ENCODE measurements at regions of chr2 and their contacts with region 1.

Region 1: DNA sequence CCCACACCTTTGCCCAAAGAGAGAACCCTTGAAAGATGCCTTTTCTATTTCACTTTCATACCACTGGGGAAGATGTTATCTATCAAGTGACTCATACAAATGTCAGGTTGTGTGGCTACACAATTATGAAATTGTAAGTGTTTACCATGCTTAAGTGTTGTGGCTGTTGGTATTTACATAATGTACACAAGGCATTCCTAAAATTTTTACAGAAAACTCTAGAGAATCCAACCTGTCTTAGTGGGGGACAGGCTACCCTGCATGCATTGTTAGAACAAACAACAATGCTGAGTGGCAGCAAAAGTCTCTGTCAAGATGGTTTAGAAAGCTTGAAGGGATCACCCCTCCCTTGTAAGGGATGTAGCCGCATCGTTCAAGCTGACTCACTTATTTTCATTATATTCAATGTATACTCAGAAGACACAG is 5.5 kb upstream of the MGAT4A start:
- DNase-seq: peak; percentile 44 to 98
- H3K4me3 ChIP-seq: no peak overlapping the region
- H3K27ac ChIP-seq: peak overlapping the region; percentile 3
- H3K4me1 ChIP-seq: peaks cover 37% of the 10 kb centered on the region
- H3K27me3 ChIP-seq: no peaks in the 10 kb centered on the region
- CTCF ChIP-seq: no peak

Region 2: DNA sequence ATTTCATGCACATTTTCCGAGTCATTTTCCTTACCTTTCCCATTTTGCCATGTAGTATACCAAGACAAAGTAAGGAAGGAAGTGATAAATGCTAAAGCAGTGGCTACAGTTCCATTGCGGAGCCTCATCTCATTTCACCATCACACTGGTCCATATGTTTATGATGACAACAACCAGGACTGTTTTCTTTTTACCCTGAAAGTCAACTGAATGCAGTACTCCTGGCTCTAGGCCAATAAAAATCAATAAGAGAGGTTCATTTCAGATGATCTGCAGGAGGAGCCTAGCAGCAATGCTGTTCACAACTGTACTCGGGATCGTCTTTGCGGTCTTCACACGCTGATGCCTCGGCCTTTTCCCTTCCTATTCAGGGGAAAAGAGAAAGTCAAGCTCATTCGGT is 10.3 kb before region 1 on chr2:
- CTCF ChIA-PET with region 1: no interaction called
- POLR2A ChIA-PET with region 1: interaction called, 12 read pairs
- intact Hi-C with region 1: no loop called
- DNase-seq: no peak
- H3K4me3 ChIP-seq: no peak overlapping the region
- H3K27ac ChIP-seq: no peak overlapping the region
- H3K4me1 ChIP-seq: peaks cover 15% of the 10 kb centered on the region
- H3K27me3 ChIP-seq: no peaks in the 10 kb centered on the region
- CTCF ChIP-seq: no peak

Region 3: DNA sequence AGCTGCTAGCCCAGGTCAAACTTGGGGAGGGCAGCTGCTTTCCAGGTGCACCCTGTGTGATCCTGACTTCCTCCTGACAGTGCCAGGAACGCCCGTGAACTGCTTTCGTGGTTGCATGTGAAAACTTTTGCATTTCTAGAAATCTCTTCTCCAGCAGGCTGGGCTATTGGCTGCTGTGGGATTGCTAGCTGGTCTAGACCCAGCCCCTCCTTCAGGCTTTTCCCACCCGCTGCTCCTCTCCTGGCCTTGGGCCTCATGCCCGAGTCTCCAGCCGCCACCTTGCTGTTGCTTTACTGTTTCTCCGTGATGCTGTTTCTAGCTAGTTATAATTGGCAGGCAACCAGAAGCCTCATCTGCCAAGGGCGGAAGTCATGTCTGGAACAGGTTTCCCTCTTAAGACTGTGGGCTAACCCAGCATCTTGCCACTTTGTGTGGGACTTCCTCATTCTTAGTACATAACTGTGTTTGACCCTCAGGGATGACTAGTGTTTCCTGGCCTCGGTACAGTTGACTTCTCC is 21.5 kb after region 1 on chr2:
- CTCF ChIA-PET with region 1: no interaction called
- POLR2A ChIA-PET with region 1: interaction called, 6 read pairs
- intact Hi-C with region 1: loop called (anchors 1 kb)
- DNase-seq: peak; percentile 86 to 100
- H3K4me3 ChIP-seq: no peak overlapping the region
- H3K27ac ChIP-seq: peak overlapping the region; percentile 73
- H3K4me1 ChIP-seq: peaks cover 38% of the 10 kb centered on the region
- H3K27me3 ChIP-seq: no peaks in the 10 kb centered on the region
- CTCF ChIP-seq: no peak

Region 4: GRCh38 chr2:98869940-98870263 is 133.4 kb after region 1 on chr2:
- CTCF ChIA-PET with region 1: no interaction called
- POLR2A ChIA-PET with region 1: no interaction called
- intact Hi-C with region 1: no loop called
- DNase-seq: peak; percentile 90 to 97
- H3K4me3 ChIP-seq: peak overlapping the region; percentile 63
- H3K27ac ChIP-seq: peak overlapping the region; percentile 95
- H3K4me1 ChIP-seq: peaks cover 66% of the 10 kb centered on the region
- H3K27me3 ChIP-seq: no peaks in the 10 kb centered on the region
- CTCF ChIP-seq: no peak

Region 5: GRCh38 chr2:98909317-98910211 is 173.1 kb after region 1 on chr2:
- CTCF ChIA-PET with region 1: no interaction called
- POLR2A ChIA-PET with region 1: no interaction called
- intact Hi-C with region 1: loop called (anchors 2 kb)
- DNase-seq: peak; percentile 91 to 92
- H3K4me3 ChIP-seq: no peak overlapping the region
- H3K27ac ChIP-seq: no peak overlapping the region
- H3K4me1 ChIP-seq: peaks cover 17% of the 10 kb centered on the region
- H3K27me3 ChIP-seq: no peaks in the 10 kb centered on the region
- CTCF ChIP-seq: no peak